Endothelial cell of umbilical vein (primary cell): ENCODE measurements at regions of chr5 and their contacts with region 1.

Region 1: GRCh38 chr5:66875315-66875714 is 279.1 kb downstream of the MAST4 start:
- DNase-seq: no peak
- H3K4me3 ChIP-seq: no peak overlapping the region
- H3K27ac ChIP-seq: no peak overlapping the region
- H3K4me1 ChIP-seq: peaks cover 10% of the 10 kb centered on the region
- H3K27me3 ChIP-seq: no peaks in the 10 kb centered on the region
- CTCF ChIP-seq: no peak
- POLR2A ChIP-seq: no peak

Region 2: DNA sequence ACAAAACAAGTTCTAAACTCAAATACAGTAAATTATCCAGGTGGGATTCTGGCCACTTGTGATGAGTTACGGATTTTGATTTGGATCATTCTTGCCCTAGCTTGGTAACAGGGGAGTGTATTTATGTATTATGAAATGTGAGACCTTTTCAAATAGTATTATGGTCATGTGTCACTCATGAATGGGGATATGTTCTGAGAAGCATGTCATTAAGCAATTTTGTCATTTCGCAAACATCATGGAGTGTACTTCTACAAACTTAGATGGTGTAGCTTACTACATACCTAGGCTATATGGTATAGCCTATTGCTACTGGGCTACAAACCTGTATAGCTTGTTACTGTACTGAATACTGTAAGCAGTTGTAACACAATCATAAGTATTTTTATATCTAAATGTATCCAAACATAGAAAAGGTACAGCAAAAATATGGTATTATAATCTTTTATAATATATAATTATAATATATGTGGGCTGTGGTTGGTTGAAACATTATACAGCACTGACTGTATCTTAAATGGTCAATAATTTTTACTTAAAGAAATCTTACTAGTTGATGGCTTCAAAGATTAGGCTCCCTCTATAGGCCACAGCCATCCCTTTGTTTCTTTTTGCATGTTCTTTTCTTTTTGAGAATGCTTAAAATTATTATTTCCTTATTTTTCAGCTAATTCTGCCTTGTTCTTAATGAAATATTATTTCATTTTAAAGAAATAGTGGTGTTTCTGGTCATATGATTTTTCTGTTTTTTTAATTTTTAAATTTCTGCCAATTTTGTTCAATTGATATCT is 150.8 kb before region 1 on chr5:
- CTCF ChIA-PET with region 1: no interaction called
- POLR2A ChIA-PET with region 1: no interaction called
- dilution Hi-C with region 1: no loop called
- intact Hi-C with region 1: no loop called
- DNase-seq: no peak
- H3K4me3 ChIP-seq: no peak overlapping the region
- H3K27ac ChIP-seq: no peak overlapping the region
- H3K4me1 ChIP-seq: no peaks in the 10 kb centered on the region
- H3K27me3 ChIP-seq: peaks cover 8 to 10% of the 10 kb centered on the region in 2 experiments
- CTCF ChIP-seq: no peak
- POLR2A ChIP-seq: no peak

Region 3: DNA sequence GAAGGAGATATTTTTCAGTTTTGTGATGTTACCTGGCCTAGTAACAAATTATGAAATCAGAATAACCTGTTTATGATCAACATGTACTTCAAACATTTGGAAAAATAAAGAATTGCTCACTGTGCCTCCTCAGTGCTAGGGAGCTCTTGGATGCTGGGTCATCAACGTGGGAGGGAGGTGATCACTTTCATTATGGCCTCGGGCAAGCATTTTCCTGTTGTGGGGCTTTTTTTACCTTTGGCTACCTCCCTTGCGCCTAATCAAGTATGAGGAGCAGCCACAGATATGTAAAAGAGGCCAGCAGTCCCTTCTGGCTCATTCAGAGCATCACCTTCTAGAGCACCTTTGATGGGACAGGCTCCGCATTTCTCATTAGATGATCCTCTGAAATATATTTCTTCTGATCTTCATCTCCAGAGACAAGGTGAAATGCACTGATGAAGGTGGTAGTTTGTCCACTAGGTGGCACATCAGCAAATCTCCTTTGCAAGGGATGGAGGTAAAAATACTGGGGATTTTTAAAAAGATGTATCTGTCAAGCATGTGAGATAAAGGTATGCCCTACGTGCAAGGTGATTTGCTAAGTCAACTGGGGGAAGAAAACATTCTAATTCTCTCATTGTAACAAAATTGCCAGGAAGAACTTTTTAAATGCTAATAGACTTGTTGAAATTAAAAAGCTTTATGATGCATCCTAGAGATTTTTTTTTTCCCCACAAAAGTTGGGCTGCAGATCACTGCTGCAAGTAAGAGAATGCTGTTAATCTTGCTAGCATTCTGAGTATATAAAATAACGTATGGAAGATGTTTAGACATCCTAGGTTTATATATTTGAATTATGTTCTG is 60.9 kb before region 1 on chr5:
- CTCF ChIA-PET with region 1: interaction called, 16 read pairs
- POLR2A ChIA-PET with region 1: no interaction called
- dilution Hi-C with region 1: no loop called
- intact Hi-C with region 1: no loop called
- DNase-seq: peak; percentile 63
- H3K4me3 ChIP-seq: no peak overlapping the region
- H3K27ac ChIP-seq: no peak overlapping the region
- H3K4me1 ChIP-seq: no peaks in the 10 kb centered on the region
- H3K27me3 ChIP-seq: peaks cover 0 to 2% of the 10 kb centered on the region in 2 experiments
- CTCF ChIP-seq: peak; percentile 62 to 75
- POLR2A ChIP-seq: no peak